Activated CD8-positive, alpha-beta T cell treated with anti-CD3 and anti-CD28 coated beads for 36 hours (primary cell): ENCODE measurements at regions of chrX and their contacts with region 1.

Region 1: GRCh38 chrX:148885207-148885606 is 384.8 kb downstream of the AFF2 start:
- DNase-seq: no peak
- ATAC-seq: no peak
- H3K4me3 Mint-ChIP-seq: no peak overlapping the region
- H3K27ac Mint-ChIP-seq: no peak overlapping the region
- H3K4me1 Mint-ChIP-seq: no peaks in the 10 kb centered on the region
- H3K27me3 Mint-ChIP-seq: no peaks in the 10 kb centered on the region
- CTCF ChIP-seq: no peak

Region 2: GRCh38 chrX:148905400-148905799 is 20.2 kb after region 1 on chrX:
- CTCF ChIA-PET with region 1: interaction called, 4 read pairs
- POLR2A ChIA-PET with region 1: no interaction called
- intact Hi-C with region 1: loop called (anchors 2 kb)
- DNase-seq: no peak
- ATAC-seq: no peak
- H3K4me3 Mint-ChIP-seq: no peak overlapping the region
- H3K27ac Mint-ChIP-seq: no peak overlapping the region
- H3K4me1 Mint-ChIP-seq: no peaks in the 10 kb centered on the region
- H3K27me3 Mint-ChIP-seq: no peaks in the 10 kb centered on the region
- CTCF ChIP-seq: no peak

Region 3: GRCh38 chrX:148929686-148930085 is 44.5 kb after region 1 on chrX:
- CTCF ChIA-PET with region 1: no interaction called
- POLR2A ChIA-PET with region 1: no interaction called
- intact Hi-C with region 1: no loop called
- DNase-seq: no peak
- ATAC-seq: no peak
- H3K4me3 Mint-ChIP-seq: no peak overlapping the region
- H3K27ac Mint-ChIP-seq: no peak overlapping the region
- H3K4me1 Mint-ChIP-seq: no peaks in the 10 kb centered on the region
- H3K27me3 Mint-ChIP-seq: no peaks in the 10 kb centered on the region
- CTCF ChIP-seq: no peak